Cardiac septum (tissue), 1 donor: ENCODE measurements at regions of chr18 and their contacts with region 1.

Region 1: DNA sequence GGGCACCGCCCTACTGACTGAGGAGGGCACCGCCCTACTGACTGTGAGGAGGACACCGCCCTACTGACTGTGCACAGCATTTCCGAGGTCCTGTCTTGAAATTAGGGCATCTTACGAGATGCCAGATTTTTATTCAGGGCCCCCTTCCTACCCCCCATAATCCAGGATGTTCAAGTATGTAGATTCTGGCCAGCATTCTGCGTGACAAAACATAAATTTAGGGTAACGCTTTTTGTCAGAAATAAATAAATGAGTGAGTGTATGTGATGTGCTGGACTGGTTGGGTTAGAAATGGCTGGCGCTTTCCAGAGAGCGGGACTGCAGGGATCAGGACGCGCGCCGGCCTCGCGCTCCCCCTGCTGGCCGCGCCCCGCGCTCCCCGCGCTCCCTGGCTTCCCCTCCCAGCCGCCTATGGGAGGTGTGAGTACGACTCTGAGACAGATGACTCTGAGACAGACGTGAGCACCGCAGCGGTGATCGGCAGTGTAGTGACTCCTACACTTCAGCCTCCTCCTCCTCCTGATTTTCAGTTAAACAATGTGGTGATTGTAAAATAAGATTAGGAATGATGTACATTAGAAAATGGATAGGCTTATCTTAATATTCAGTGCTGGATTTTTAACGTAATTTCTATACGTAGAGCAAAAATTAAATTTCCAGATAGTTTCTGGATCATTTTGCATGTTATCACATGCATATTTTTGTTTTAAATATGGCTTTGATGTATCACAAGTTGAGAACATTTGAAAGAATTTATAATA is 149.2 kb upstream of the NFATC1 start:
- DNase-seq: no peak

Region 2: DNA sequence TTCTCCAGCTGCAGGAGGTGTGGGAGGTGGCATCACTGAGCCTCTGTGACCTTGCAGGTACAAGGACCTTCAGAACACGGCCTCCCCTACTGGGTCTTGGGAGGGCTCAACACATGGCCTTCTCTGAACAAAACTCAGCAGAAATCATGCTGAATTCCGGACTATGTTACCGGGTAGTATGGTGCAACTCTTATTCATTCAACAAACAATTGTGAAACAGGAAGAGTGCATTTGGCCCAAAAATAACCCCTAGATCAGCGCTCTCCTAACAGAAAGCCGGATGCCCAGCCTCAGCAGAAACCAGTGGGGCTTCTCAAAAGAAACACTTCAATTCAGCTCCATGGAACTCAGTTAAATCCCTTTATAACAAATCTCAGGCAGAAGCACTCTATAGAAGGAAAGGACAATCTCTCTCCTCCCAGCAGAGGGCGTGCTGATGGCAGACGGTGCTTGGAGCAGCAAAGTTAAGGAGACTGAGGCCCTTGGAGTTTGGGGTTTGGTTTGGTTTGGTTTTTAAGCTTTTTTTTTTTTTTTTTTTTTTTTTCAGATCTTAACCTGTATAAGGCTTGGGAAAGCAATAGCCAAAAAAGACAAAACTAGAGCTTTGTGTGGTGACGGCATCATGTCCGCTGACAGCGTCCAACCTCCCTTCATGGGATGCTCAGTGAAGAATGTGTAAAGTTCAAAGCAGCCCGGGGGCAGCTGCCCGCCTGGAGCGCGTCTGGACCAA is 371.1 kb before region 1 on chr18:
- intact Hi-C with region 1: loop called (anchors 10 kb)
- DNase-seq: no peak

Region 3: GRCh38 chr18:79093986-79094385 is 152.5 kb before region 1 on chr18:
- intact Hi-C with region 1: no loop called
- DNase-seq: no peak